Head of caudate nucleus (tissue), 42 donors: ENCODE measurements at regions of chr19 and their contacts with region 1.

Region 1: GRCh38 chr19:13277104-13277809 is 127.0 kb downstream of the IER2 start:
- DNase-seq: peak in 33 of 42 donors; percentile 3 to 83 (median 54)

Region 2: DNA sequence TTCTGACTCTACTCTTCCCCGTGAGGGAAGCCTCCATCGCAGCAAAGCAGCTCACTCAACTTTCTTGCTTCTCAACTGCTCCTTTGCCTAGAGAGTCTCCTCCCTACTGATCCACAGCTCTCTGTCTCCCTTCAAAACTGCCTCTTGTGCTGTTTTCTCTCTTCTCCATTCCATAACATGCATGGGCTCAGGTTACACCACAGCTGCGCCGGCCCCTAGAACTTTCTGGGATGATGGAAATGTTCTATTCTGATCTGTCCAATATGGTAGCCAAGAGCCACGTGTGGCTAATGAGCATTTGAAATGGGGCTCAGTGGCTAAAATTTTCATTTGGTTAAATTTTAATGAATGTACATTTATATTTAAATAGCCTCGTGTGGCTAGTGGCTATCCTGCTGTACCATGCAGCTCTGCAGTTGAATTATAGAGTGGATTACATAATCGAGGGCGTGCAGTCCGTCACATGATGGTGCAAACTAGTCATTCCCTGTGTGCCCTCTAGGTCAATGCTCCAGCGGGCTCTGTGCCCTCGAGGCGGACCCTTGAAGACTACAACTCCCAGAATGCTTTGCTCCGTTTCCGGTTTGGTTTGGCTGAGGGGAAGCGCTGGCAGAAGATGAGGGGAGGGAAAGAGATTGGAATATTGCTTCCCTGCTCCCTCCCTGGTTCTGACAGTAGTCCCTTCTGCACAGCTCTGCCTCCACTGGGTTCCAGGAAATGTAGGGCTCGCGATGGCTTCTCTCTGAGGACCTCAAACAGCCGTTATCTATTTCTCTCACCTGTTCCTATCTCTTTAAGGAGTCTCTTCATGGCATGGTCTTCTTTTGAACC is 119.2 kb after region 1 on chr19:
- intact Hi-C with region 1: no loop called
- DNase-seq: peak in 41 of 42 donors; percentile 10 to 82 (median 48)

Region 3: GRCh38 chr19:13588957-13589833 is 311.9 kb after region 1 on chr19:
- intact Hi-C with region 1: loop called (anchors 2 kb)
- DNase-seq: peak; percentile 47 to 92 (median 80)